Lower leg skin (tissue), 4 donors: ENCODE measurements at regions of chr3 and their contacts with region 1.

Region 1: GRCh38 chr3:29775340-29775739 is 494.5 kb downstream of the RBMS3 start:
- DNase-seq: no peak
- H3K4me3 ChIP-seq: no peak overlapping the region
- CTCF ChIP-seq: no peak
- POLR2A ChIP-seq: no peak

Region 2: DNA sequence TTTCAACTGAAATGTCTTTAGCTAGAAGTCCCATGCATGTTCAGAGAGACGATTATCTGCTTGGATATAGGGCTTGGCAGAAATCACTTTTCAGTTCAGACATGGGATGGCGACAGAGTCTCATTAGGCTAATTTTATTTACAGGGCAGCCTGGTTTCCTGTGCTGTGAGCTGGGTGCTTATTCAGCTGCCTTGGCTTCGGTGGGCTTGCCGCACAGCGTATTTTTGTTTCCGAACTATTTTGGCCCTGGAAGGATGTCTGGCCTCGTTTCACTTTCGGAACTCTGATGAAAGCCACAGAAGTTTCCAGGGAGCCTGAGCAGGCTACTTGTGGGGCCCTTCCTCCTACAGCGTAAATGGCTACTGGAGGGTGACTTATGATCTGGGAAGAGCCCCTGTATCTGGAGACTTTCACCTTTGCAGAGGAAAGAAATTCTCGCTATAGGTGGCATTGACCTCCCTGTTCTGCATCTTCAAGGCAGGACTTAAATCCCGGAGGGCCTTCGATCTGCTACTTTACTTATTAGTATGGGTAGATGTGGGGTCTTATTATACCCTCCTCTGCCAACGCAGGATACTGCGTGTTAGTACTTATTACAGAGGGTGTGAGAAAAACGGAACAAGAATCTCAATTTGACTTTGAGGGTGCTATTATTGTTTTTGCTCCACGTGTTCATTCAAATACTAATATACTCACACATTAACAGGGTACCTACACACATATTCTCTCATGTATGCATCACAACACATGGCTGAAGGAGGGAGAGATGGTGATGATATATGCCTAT is 858.4 kb before region 1 on chr3:
- intact Hi-C with region 1: loop called (anchors 5 kb)
- DNase-seq: peak in 1 of 2 donors; percentile 42
- H3K4me3 ChIP-seq: no peak overlapping the region
- CTCF ChIP-seq: no peak
- POLR2A ChIP-seq: no peak

Region 3: DNA sequence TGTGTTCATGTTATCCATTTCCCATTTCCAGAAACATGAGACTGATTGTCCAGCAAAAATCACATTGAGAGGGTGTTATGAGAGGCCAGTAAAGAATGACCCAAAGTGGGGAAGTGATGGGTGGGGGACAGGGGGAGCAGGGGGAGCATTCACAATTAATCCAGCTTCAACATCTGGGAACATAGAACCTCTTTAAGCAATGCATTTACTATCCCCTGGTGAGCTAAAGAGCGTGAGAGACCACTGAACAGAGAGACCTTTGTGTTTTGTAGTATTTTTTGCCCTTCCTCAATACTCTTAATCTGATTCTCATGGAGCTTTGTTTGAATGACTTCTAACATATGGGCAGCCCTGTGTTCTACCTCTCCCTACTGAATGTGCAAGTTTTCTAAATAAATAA is 29.9 kb before region 1 on chr3:
- intact Hi-C with region 1: no loop called
- DNase-seq: no peak
- H3K4me3 ChIP-seq: no peak overlapping the region
- CTCF ChIP-seq: no peak
- POLR2A ChIP-seq: no peak

Region 4: DNA sequence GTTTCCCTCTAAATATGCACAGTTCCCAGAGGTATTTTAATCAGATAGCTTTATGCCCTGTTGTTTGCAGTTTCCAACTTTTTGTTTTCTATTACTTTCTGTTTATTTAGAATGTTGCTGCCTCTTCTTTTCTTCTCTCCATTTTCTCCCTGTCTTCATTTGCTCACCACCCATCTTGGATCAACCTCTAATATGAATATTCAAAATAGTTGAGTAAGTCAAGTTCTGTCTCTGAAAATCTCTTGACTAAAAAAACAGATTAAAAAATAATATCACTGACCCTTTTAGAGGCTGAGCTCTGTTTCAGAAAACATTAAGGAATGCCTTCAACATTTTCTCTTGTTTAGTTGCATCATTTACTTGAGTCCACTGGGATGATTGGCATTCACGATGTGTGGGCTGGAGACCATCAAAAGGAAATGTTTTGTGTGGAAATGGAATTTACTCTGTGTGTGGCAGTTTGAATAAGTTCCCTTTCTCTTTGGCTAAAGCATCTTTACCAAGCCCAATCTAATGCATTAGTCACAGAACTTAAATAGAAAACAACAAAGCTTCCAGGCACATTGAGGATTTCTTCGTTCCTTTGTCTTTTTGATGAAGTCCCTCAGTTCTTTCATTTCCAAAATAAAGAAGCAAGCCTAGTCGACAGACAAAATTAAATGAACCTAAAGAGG is 197.1 kb after region 1 on chr3:
- intact Hi-C with region 1: no loop called
- DNase-seq: no peak
- H3K4me3 ChIP-seq: no peak overlapping the region
- CTCF ChIP-seq: no peak
- POLR2A ChIP-seq: no peak